Psoas muscle (tissue), 8 donors: ENCODE measurements at regions of chr7 and their contacts with region 1.

Region 1: GRCh38 chr7:80918909-80919662 is at the start of gene SEMA3C:
- DNase-seq: peak; percentile 94 to 95
- ATAC-seq: peak; percentile 94 to 99 (median 97)
- H3K4me3 ChIP-seq: peak within 1 kb of the TSS; percentile 88
- H3K27ac ChIP-seq: peak within 1 kb of the TSS; percentile 80
- H3K4me1 ChIP-seq: peaks cover 13% of the 10 kb centered on the region
- H3K27me3 ChIP-seq: no peaks in the 10 kb centered on the region
- CTCF ChIP-seq: no peak
- total RNA-seq, gene SEMA3C: 15.1 to 63.1 (median 24.2) TPM

Region 2: DNA sequence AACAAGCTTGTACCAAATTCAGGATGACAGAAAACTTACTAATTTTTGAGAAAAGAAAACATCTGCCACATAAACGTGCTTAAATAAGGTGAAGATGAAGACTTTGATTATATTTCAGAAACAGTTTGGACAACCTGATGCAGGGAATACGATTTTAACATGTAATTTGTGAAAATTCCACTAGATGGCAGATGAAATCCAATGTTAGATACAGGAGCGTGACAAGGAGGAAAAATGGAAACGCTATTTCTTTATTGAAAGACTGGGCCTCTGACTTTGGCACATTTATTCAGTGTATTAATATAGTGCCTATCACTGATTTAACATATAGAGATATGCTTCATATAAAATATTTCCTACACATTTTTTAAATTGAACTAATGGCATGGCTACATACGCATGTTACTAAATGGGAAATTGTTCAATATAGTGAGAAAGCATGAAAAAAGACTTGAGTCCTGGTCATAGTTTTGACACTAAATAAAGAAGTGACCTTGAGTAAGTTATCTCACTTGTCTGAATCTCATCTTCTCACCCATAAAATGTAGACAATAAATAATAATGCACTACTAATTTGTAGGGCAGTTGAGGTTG is 219.9 kb before region 1 on chr7:
- intact Hi-C with region 1: loop called in 1 of 2 experiments (anchors 10 kb)
- DNase-seq: no peak
- ATAC-seq: peak in 3 of 4 donors; percentile 51 to 84 (median 73)
- H3K4me3 ChIP-seq: no peak overlapping the region
- H3K27ac ChIP-seq: no peak overlapping the region
- H3K4me1 ChIP-seq: no peaks in the 10 kb centered on the region
- H3K27me3 ChIP-seq: no peaks in the 10 kb centered on the region
- CTCF ChIP-seq: peak; percentile 77

Region 3: GRCh38 chr7:80781561-80781979 is 137.5 kb before region 1 on chr7:
- intact Hi-C with region 1: loop called in 1 of 2 experiments (anchors 10 kb)
- DNase-seq: no peak
- ATAC-seq: peak; percentile 51 to 88 (median 79)
- H3K4me3 ChIP-seq: no peak overlapping the region
- H3K27ac ChIP-seq: no peak overlapping the region
- H3K4me1 ChIP-seq: peaks cover 41% of the 10 kb centered on the region
- H3K27me3 ChIP-seq: no peaks in the 10 kb centered on the region
- CTCF ChIP-seq: no peak

Region 4: GRCh38 chr7:80794631-80795573 is 124.2 kb before region 1 on chr7:
- intact Hi-C with region 1: loop called in 1 of 2 experiments (anchors 10 kb)
- DNase-seq: no peak
- ATAC-seq: peak in 3 of 4 donors; percentile 9 to 41 (median 37)
- H3K4me3 ChIP-seq: no peak overlapping the region
- H3K27ac ChIP-seq: peak overlapping the region; percentile 31
- H3K4me1 ChIP-seq: peaks cover 30% of the 10 kb centered on the region
- H3K27me3 ChIP-seq: no peaks in the 10 kb centered on the region
- CTCF ChIP-seq: no peak

Region 5: DNA sequence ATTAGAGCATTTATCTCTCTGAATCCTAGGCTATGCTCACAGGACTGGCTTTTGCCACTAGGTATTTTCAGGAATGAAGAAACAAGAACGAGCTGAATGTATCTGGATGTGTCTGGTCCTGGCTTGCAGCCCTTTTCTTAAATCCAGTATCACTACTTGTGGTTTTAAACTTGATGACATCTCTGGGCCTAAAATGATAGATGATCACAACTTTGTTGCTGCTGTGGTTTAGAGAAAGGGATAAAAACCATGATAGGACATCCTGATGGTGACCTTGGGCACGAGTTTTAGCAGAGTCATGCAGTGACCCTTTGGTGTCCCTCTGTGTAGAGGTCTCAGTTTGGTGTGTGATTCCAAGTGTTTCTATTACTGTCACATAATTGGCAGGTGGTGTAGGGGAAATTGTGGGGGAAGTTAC is 31.5 kb after region 1 on chr7:
- intact Hi-C with region 1: no loop called
- DNase-seq: no peak
- ATAC-seq: peak; percentile 60 to 95 (median 66)
- H3K4me3 ChIP-seq: no peak overlapping the region
- H3K27ac ChIP-seq: peak overlapping the region; percentile 64
- H3K4me1 ChIP-seq: peaks cover 17% of the 10 kb centered on the region
- H3K27me3 ChIP-seq: no peaks in the 10 kb centered on the region
- CTCF ChIP-seq: no peak

Region 6: DNA sequence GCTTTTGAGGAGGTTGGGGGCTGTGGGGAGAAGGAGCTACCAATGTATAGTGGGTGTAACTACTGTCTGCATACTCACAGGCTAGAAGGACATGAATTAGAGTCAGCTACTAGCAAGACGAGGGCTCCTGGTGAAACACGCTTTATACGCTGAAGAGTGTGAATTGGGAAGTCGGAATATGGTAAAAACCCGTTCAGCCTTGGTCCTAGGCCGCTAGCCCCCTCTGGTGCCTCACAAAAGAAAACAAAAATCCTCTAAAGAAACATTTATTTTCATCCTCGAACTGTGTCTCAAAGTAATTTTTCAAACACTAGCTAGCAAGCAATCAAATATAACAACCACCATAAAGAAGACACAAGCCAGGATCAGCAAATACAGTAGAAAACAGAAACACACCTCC is 337.9 kb after region 1 on chr7:
- intact Hi-C with region 1: loop called in 1 of 2 experiments (anchors 5 kb)
- DNase-seq: peak in 1 of 2 donors; percentile 23
- ATAC-seq: peak in 2 of 4 donors; percentile 44 to 49
- H3K4me3 ChIP-seq: no peak overlapping the region
- H3K27ac ChIP-seq: no peak overlapping the region
- H3K4me1 ChIP-seq: no peaks in the 10 kb centered on the region
- H3K27me3 ChIP-seq: no peaks in the 10 kb centered on the region
- CTCF ChIP-seq: peak; percentile 48

Region 7: GRCh38 chr7:81457852-81458522 is 538.9 kb after region 1 on chr7:
- intact Hi-C with region 1: loop called (anchors 5 to 10 kb)
- DNase-seq: no peak
- ATAC-seq: no peak
- H3K4me3 ChIP-seq: no peak overlapping the region
- H3K27ac ChIP-seq: no peak overlapping the region
- H3K4me1 ChIP-seq: no peaks in the 10 kb centered on the region
- H3K27me3 ChIP-seq: no peaks in the 10 kb centered on the region
- CTCF ChIP-seq: peak; percentile 43